ENCODE measurements at regions of chr10 and their contacts with region 1.

Region 1: GRCh38 chr10:102596506-102596971 is 47.7 kb upstream of the TRIM8 start:
- DNase-seq: peak; percentile 69
- H3K4me3 ChIP-seq: no peak overlapping the region
- H3K27ac ChIP-seq: no peak overlapping the region
- H3K4me1 ChIP-seq: no peaks in the 10 kb centered on the region
- H3K27me3 ChIP-seq: no peaks in the 10 kb centered on the region
- CTCF ChIP-seq: peak; percentile 77

Region 2: GRCh38 chr10:102055647-102056419 is 540.7 kb before region 1 on chr10 and contains the start of gene ARMH3:
- intact Hi-C with region 1: no loop called
- DNase-seq: peak; percentile 95
- H3K4me3 ChIP-seq: peak within 1 kb of the TSS; percentile 88
- H3K27ac ChIP-seq: peak within 1 kb of the TSS; percentile 95
- H3K4me1 ChIP-seq: no peaks in the 10 kb centered on the region
- H3K27me3 ChIP-seq: no peaks in the 10 kb centered on the region
- CTCF ChIP-seq: no peak
- total RNA-seq, gene ARMH3: 25.1 to 31.3 TPM

Region 3: DNA sequence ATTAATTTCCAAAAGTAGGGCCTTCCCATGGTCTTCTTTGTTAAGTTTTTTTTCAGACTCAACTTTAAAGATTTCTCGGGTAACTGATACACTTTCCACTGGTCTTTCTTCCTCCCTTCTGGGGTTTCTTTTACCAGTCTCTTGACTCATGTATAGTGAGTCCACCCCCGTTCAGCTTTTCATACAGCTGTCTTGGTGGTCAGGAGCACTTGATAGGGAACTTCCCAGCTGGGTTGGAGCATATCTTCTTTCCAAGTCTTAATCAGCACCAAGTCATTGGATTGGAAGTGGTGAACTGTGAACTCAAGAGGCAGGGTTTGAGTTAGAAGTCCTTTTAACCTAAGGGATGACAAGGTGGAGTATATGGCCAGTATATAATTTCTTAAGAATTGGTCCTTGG is 399.6 kb before region 1 on chr10:
- intact Hi-C with region 1: no loop called
- DNase-seq: no peak
- H3K4me3 ChIP-seq: no peak overlapping the region
- H3K27ac ChIP-seq: no peak overlapping the region
- H3K4me1 ChIP-seq: no peaks in the 10 kb centered on the region
- H3K27me3 ChIP-seq: no peaks in the 10 kb centered on the region
- CTCF ChIP-seq: no peak

Region 4: DNA sequence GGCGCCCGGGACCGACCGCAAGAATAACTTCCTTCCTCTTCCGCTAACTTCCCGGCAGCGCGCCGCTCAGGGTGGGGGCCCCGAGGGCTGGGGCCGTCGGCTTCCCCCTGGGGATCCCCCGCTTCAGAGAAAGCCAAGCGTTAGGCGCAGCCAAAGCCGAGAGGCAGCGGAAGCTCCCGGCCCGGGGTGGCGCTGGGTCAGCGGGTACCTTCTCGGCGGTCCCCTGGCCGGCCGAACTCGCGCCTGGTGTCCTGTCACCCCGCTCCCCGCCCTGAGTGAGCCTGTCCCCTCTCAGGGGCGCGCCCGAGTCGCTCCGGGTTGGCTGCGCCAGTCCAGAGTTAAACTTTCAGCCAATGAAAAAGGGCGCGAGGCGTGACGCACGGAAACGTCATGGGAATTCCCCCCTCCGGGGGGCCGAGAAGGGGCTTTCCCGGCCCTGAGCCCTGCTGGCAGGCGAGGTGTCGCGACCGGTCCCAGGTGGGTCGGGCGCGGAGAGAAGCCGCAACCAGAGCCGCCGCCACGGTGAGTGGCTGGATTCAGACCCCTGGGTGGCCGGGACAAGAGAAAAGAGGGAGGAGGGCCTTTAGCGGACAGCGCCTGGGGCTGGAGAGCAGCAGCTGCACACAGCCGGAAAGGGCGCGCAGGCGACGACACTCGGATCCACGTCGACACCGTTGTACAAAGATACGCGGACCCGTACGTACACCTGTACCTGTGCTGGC is 202.3 kb before region 1 on chr10:
- intact Hi-C with region 1: loop called (anchors 10 kb)
- DNase-seq: peak; percentile 97
- H3K4me3 ChIP-seq: peak overlapping the region; percentile 73
- H3K27ac ChIP-seq: peak overlapping the region; percentile 98
- H3K4me1 ChIP-seq: peaks cover 11% of the 10 kb centered on the region
- H3K27me3 ChIP-seq: no peaks in the 10 kb centered on the region
- CTCF ChIP-seq: peak; percentile 97

Region 5: DNA sequence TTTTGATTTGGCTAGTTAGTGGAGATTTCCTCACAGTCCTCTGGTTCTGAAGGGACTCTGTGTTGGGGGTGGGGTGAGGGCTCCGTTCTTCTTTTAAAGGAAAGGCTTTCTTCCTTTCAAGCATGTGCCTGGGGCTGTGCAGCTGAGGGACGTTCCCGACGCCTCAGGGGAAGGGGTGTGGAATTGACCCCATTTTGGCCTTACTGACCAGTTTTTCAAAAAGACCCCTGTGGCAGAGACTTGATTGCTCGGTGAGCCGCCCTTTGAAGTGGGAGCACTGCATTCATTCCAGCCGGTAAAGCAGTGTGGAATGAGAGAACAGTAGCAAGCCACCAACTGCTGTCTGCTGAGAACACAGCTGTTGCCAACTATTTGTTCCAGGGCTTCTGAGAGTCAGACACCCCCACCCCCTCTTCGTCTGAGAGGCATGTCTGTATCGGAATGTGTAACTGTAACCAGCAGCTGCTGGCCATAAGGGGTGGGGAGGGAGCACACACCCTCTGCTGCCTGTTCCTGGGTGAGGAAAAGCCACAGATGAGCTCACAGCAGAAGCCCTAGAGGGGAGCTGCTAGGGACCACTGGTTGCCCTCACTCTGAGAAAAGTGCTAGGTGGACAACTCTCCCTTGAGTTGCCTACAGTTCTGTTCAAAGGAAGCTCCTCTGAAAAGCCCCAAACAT is 180.4 kb after region 1 on chr10:
- intact Hi-C with region 1: no loop called
- DNase-seq: peak; percentile 40
- H3K4me3 ChIP-seq: no peak overlapping the region
- H3K27ac ChIP-seq: peak overlapping the region; percentile 48
- H3K4me1 ChIP-seq: no peaks in the 10 kb centered on the region
- H3K27me3 ChIP-seq: no peaks in the 10 kb centered on the region
- CTCF ChIP-seq: no peak

Measured in colonic mucosa (tissue), 4 donors.